Activated naive CD4-positive, alpha-beta T cell treated with anti-CD3 and anti-CD28 coated beads for 36 hours (primary cell): ENCODE measurements at regions of chr1 and their contacts with region 1.

Region 1: GRCh38 chr1:185044981-185045813 is at the start of gene RNF2:
- DNase-seq: peak; percentile 83
- H3K4me3 Mint-ChIP-seq: peak within 1 kb of the TSS; percentile 89
- H3K27ac Mint-ChIP-seq: peak within 1 kb of the TSS; percentile 69
- H3K4me1 Mint-ChIP-seq: peaks cover 30% of the 10 kb centered on the region
- H3K27me3 Mint-ChIP-seq: no peaks in the 10 kb centered on the region
- total RNA-seq, gene RNF2: 19.2 to 23.4 TPM

Region 2: DNA sequence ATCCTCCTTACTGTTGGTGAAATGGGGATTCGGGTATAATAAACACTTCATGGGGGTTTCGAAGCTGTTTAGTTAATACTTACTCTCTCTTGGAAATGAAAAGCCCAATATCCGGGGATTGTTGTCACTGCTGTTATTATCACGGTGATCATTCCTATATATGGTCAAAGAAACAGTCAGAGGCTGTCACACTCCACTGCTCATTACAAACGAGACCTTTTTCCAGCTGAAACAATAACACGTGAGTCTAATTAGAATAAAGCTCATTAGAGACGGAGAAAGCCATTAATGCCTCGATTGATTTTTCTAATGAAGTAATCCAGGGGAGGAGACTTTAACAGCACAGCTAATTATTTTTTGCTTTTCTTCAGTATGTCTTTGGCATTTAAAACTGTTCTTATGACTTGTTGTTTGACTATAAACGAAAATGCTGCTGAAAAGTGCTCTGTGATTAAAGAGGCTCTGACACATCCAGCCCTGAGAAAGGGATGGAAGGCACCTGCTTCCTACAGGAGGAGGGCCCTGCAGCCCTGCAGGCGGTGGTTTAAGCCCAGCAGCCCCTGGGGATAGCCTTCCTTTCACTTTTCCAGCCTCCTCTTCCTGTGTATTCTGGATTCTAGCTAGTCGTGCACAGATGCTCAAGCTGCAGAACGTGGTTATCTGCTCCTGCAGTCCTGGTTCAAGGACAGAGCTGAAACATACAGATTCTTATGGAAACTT is 434.2 kb before region 1 on chr1:
- CTCF ChIA-PET with region 1: no interaction called
- intact Hi-C with region 1: no loop called
- DNase-seq: no peak
- H3K4me3 Mint-ChIP-seq: no peak overlapping the region
- H3K27ac Mint-ChIP-seq: no peak overlapping the region
- H3K4me1 Mint-ChIP-seq: no peaks in the 10 kb centered on the region
- H3K27me3 Mint-ChIP-seq: no peaks in the 10 kb centered on the region

Region 3: DNA sequence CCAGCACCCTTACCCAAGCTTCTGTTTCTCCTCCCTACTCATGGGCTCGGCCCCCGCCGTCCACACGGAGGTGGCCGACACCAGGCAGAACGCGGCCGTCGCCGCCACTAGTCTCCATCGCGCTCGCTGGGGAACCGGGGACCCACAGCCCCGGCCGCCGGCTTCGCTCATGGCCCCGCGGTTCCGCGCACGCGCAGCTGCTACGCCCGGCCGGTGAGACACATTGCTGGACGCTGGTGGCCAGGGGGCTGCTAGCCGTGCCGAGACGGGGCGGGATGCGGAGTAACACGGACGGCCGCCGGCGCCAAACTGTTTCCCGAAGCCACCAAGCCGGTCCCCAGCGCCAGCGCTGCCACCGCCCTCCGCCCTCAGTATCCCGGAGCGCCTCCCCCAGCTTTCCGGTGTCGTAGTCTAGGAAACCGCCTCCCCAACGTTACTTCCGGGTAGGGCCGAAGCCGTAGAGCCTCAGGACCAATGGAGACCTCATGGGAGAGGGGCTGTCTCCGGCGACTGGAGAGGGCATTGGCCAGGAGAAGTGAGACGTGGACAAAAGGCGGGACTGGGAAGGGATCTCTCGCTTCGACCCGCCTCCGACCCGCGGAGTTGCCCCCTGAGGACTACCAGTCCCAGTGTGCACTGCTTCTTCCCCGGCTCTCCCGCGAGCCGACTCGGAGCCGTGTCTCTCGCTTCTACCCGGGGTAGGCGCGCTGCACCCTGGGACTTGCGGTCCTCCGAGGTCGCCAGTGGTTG is 290.5 kb before region 1 on chr1 and contains the start of gene EDEM3:
- CTCF ChIA-PET with region 1: interaction called, 4 read pairs
- intact Hi-C with region 1: loop called (anchors 1 kb)
- DNase-seq: peak; percentile 98
- H3K4me3 Mint-ChIP-seq: peak within 1 kb of the TSS; percentile 88
- H3K27ac Mint-ChIP-seq: peak within 1 kb of the TSS; percentile 88
- H3K4me1 Mint-ChIP-seq: peaks cover 36% of the 10 kb centered on the region
- H3K27me3 Mint-ChIP-seq: no peaks in the 10 kb centered on the region
- total RNA-seq, gene EDEM3: 9.9 to 10.5 TPM

Region 4: GRCh38 chr1:185017326-185017725 is 27.9 kb before region 1 on chr1:
- CTCF ChIA-PET with region 1: no interaction called
- intact Hi-C with region 1: no loop called
- DNase-seq: no peak
- H3K4me3 Mint-ChIP-seq: no peak overlapping the region
- H3K27ac Mint-ChIP-seq: no peak overlapping the region
- H3K4me1 Mint-ChIP-seq: no peaks in the 10 kb centered on the region
- H3K27me3 Mint-ChIP-seq: no peaks in the 10 kb centered on the region

Region 5: DNA sequence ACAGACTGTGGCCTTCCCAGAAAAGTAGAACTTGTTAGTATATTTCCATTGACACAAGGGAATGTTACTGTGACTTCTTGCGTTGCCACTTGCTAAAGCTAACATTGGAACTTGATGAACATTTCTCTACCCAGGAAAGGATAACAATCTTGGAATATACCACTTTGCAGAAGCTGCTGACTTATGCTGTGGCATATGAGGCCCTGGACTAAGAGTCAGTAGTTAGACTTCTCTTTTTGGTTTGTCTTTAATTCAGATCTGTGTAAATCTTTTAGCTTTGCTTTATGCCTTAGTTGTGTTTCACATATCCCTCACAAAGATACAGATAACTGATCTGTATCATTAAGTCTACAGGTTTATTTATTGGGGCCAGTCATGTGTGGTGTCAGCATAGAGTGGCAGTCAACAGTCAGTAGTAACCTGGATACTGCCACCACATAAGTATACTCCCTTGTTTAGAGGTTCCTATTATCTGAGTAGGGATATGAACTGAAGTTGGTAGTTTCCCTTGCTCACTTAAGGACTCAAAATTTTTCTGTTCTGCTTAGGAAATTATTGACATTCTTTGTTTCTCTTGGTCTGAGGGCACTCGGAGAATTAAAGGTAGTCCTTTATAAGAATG is 14.9 kb after region 1 on chr1:
- CTCF ChIA-PET with region 1: interaction called, 4 read pairs
- intact Hi-C with region 1: loop called (anchors 1 kb)
- DNase-seq: no peak
- H3K4me3 Mint-ChIP-seq: no peak overlapping the region
- H3K27ac Mint-ChIP-seq: no peak overlapping the region
- H3K4me1 Mint-ChIP-seq: peaks cover 55% of the 10 kb centered on the region
- H3K27me3 Mint-ChIP-seq: no peaks in the 10 kb centered on the region

Region 6: GRCh38 chr1:185227161-185227560 is 182.0 kb after region 1 on chr1:
- CTCF ChIA-PET with region 1: no interaction called
- intact Hi-C with region 1: no loop called
- DNase-seq: no peak
- H3K4me3 Mint-ChIP-seq: no peak overlapping the region
- H3K27ac Mint-ChIP-seq: no peak overlapping the region
- H3K4me1 Mint-ChIP-seq: no peaks in the 10 kb centered on the region
- H3K27me3 Mint-ChIP-seq: no peaks in the 10 kb centered on the region

Region 7: GRCh38 chr1:185566995-185567394 is 521.8 kb after region 1 on chr1:
- CTCF ChIA-PET with region 1: no interaction called
- intact Hi-C with region 1: loop called (anchors 5 kb)
- DNase-seq: peak; percentile 57
- H3K4me3 Mint-ChIP-seq: no peak overlapping the region
- H3K27ac Mint-ChIP-seq: peak overlapping the region; percentile 70
- H3K4me1 Mint-ChIP-seq: peaks cover 68% of the 10 kb centered on the region
- H3K27me3 Mint-ChIP-seq: no peaks in the 10 kb centered on the region